GM18951 (cell line): ENCODE measurements at regions of chr3 and their contacts with region 1.

Region 1: GRCh38 chr3:156674046-156674910 is at the start of gene TIPARP:
- POLR2A ChIP-seq: peak; percentile 99

Region 2: DNA sequence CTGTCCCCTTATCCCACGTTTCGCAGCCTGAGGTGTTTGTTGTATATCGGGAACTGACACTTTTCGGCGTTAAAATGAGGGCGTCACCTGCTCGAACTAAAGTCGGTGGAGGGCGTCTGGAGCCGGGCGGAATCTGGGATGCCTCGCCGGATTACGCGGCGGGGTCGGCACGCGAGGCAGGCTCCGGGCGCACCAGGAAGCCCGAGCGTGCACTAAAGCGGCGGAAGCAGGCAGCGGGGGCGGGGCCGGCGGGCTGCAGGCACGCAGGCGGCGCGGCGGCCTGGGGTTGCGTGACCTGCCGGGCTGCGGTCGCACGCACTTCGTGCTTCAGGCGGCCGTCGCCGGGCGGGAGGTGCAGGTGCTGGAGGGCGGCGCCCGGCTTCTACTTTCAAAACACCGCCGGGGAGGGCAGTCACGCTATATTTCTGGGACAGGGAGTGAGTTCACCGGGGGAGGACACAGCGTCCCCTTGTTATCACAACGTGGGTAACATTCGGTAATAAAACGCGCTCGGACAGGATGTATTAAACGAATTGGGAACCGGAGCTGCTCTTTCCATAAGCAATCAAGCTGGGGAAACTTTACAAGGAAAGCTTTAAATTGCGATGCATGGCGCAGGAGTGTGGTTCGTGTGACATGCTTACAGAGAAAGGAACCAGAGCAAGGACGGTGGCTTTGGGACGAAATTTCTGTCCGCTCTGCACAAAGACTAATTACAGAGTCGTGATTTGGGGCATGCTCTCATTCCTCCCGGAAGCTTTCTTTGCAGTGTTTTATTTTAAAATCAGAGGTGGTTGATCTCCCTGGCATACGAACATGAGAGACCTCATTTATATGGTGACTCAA is 142.7 kb after region 1 on chr3:
- in situ Hi-C with region 1: loop called (anchors 10 kb)
- POLR2A ChIP-seq: peak; percentile 74

Region 3: DNA sequence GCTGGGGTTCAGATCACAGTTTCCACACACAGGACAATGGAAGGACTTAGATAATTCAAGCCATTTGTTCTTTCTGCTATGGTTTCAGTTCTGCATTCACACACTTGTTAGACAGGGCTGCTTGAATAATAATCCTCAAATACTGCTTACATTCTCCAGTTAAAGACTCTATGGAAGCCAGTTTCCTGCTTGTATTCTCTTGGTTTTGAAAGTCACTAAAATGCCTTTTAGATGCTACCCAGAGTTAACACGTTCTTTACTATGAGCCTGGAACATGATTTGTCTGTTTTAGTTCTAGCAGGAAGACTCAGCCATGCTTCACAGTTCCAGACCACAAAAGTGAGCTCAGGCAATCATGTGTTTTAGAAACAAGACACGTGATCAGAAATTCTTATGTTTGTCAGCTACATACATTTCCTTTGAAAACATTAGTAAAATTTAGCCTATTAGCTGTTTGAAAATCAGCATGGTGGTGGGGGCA is 304.2 kb after region 1 on chr3:
- in situ Hi-C with region 1: no loop called
- POLR2A ChIP-seq: no peak